ENCODE measurements at regions of chr11 and their contacts with region 1.

Region 1: GRCh38 chr11:46308631-46309419 is 31.4 kb downstream of the CREB3L1 start:
- DNase-seq: peak; percentile 59 to 66 (median 65)
- H3K4me3 ChIP-seq: no peak overlapping the region
- H3K4me3 Mint-ChIP-seq: peak overlapping the region in 1 of 2 donors; percentile 15
- H3K27ac ChIP-seq: no peak overlapping the region
- H3K27ac Mint-ChIP-seq: peak overlapping the region in 2 of 7 donors; percentile 5 to 40
- H3K4me1 ChIP-seq: peaks cover 19 to 33% of the 10 kb centered on the region in 2 donors
- H3K4me1 Mint-ChIP-seq: peaks cover 26% of the 10 kb centered on the region
- H3K27me3 ChIP-seq: no peaks in the 10 kb centered on the region
- H3K27me3 Mint-ChIP-seq: peaks cover 0 to 7% (median 6%) of the 10 kb centered on the region in 3 donors
- CTCF ChIP-seq: peak; percentile 97

Region 2: GRCh38 chr11:45964911-45965389 is 343.9 kb before region 1 on chr11:
- intact Hi-C with region 1: loop called in 1 of 2 experiments (anchors 2 kb)
- DNase-seq: peak; percentile 44 to 62 (median 48)
- H3K4me3 ChIP-seq: no peak overlapping the region
- H3K4me3 Mint-ChIP-seq: no peak overlapping the region
- H3K27ac ChIP-seq: no peak overlapping the region
- H3K27ac Mint-ChIP-seq: no peak overlapping the region
- H3K4me1 ChIP-seq: peaks cover 13 to 14% of the 10 kb centered on the region in 2 donors
- H3K4me1 Mint-ChIP-seq: peaks cover 18% of the 10 kb centered on the region
- H3K27me3 ChIP-seq: no peaks in the 10 kb centered on the region
- H3K27me3 Mint-ChIP-seq: no peaks in the 10 kb centered on the region
- CTCF ChIP-seq: peak; percentile 96

Region 3: DNA sequence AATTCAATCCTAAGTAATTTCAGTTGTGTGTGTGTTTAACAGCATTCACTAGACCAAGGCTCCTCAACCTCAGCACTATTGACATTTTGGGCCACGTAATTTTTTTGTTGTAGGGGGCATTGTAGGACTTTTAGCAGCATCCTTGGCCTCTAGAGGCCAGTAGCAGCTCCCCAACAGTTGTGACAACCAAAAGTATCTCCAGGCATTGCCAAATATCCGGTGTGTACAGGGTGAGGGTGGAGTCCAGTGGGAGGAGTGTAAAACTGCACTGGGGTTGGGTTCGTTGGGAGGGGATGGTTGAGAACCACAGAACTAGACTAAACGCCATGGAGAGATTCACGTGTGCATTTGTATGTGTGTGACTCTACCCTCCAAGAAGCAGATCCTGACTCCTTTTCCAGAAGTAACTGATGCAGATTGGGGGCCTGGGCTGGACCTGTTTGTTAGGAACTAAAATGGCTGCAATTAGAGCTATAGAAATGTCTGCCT is 181.6 kb before region 1 on chr11:
- intact Hi-C with region 1: loop called (anchors 5 to 10 kb)
- DNase-seq: peak; percentile 84 to 89 (median 87)
- H3K4me3 ChIP-seq: peak overlapping the region in 1 of 3 experiments; percentile 54
- H3K4me3 Mint-ChIP-seq: peak overlapping the region; percentile 55 to 69
- H3K27ac ChIP-seq: peak overlapping the region in 1 of 2 donors; percentile 67
- H3K27ac Mint-ChIP-seq: peak overlapping the region; percentile 48 to 95 (median 89)
- H3K4me1 ChIP-seq: peaks cover 24% of the 10 kb centered on the region in 2 donors
- H3K4me1 Mint-ChIP-seq: peaks cover 22% of the 10 kb centered on the region
- H3K27me3 ChIP-seq: no peaks in the 10 kb centered on the region
- H3K27me3 Mint-ChIP-seq: peaks cover 0 to 4% (median 2%) of the 10 kb centered on the region in 3 donors
- CTCF ChIP-seq: peak; percentile 72

Region 4: DNA sequence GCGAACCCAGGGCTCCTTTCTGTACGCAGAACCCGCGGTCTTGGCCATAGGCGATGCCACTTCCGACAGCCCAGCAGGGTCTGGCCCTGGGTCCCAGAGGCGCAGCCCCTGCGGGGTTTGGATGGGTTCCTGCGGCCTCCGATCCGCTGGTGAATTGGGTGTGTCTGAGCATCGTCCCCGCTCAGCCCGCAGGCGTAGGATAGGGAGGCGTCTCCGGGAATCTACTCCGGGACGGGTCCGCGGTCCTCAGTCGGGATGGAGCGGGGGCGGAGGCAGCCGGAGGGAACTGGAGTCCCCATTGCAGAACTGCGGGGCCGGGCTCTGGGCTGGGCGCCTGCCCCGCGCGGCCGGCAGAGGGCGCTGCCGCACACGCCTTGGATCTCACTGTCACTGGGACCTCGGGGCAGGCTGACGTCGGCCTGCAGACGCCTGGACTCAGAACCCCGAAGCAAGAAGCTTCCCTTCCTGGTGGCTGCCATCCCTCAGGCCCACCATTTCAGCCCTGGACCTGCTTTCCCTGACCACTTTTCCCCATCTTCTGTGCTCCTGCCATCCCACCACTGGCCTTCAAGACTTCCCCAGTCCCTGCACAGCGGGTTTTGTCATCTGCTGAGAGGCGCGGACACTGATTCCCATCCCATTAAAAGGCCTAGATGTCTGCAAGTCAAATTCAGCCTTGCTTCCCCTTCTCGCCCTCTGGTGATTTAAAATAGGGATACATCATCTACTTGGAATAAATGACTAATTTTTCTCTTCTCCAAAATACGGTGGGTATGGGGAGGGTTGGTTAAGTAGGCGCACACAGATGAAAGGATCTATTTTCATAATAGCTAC is 69.6 kb before region 1 on chr11:
- intact Hi-C with region 1: loop called (anchors 5 kb)
- DNase-seq: peak; percentile 81 to 88 (median 84)
- H3K4me3 ChIP-seq: peak overlapping the region; percentile 37 to 78 (median 56)
- H3K4me3 Mint-ChIP-seq: peak overlapping the region; percentile 79 to 87
- H3K27ac ChIP-seq: peak overlapping the region; percentile 64 to 96
- H3K27ac Mint-ChIP-seq: peak overlapping the region in 6 of 7 donors; percentile 68 to 94 (median 92)
- H3K4me1 ChIP-seq: peaks cover 48 to 56% of the 10 kb centered on the region in 2 donors
- H3K4me1 Mint-ChIP-seq: peaks cover 51% of the 10 kb centered on the region
- H3K27me3 ChIP-seq: no peaks in the 10 kb centered on the region
- H3K27me3 Mint-ChIP-seq: peaks cover 3 to 4% (median 4%) of the 10 kb centered on the region in 3 donors
- CTCF ChIP-seq: peak; percentile 99